AG04450 (cell line): ENCODE measurements at regions of chr2 and their contacts with region 1.

Region 1: DNA sequence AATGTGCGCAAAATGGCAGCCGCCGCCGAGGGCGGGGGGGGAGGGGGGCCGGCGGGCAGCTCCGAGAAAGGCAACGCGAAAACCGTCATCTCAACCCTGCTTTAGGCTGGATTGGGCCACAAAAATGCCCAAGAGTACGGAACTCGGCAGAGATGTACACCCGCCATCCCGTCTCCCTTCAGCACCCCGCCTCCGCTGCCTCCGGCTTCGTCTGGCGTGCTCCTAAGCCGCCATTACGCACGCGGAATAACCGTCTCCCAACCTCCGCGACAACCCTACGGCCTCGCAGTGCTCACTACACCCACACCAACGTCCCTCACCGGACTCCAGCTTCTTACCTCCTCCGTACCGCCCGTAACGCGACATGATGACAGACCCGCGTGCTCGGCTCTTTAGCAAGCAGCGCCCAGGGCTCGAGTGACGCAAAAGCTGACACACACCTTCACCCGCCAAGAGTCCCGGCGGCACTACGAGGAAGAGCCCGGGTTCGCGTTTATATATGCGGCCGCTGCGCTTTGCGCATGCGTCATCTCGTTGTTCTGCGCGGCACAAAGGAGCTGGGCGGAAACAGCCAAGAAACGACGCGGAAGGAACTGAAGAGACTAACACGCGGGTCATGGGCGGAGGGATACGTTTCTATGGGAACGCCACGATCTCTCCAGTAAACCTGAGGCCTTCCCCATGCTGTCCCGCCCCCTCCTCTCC is at the start of gene SRSF7:
- DNase-seq: peak; percentile 98
- H3K4me3 ChIP-seq: peak within 1 kb of the TSS; percentile 100
- H3K27ac ChIP-seq: peak within 1 kb of the TSS; percentile 85
- H3K27me3 ChIP-seq: no peaks in the 10 kb centered on the region
- CTCF ChIP-seq: no peak
- polyA plus RNA-seq, gene SRSF7: 195 and 238 TPM in 2 replicates

Region 2: DNA sequence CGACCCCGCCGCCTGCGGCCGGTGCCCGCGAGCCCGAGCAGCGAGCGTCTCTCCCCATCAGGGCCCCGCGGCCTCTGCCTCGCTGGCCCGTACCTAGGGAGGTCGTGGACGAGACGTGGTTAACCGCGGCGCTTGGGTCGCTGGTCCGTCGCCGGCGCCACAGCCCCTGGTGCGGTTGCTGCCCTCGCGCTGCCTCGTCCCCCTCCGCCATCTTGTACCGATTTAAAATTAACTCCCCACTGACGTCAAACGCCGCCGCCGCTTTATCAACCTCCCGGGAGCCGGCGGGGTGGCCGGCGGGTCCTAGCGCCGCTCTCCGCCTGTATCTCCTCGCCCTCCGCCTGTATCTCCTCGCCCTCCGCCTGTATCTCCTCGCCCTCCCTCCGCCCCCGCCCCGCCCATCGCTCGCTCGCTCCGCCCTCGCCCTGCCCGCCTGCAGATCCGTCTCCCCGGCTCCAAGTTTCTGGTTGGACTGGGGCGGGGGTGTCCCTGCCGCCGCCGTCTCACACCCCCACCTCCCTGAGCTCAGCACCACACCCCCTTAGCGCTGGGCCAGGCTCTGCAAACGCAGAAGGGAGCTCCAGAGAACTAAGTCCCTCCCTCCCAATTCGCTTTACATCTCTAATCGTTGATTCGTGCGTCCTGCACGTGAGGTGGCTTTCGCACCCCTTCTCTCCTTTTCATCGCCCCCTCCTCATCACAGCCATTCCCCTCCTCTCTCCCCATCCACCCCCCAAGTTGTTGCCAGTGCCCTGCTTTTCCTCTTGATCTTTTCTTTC is 373.8 kb before region 1 on chr2 and contains the start of gene ATL2:
- CTCF ChIA-PET with region 1: no interaction called
- POLR2A ChIA-PET with region 1: interaction called, 11 read pairs
- DNase-seq: peak; percentile 77
- H3K4me3 ChIP-seq: peak within 1 kb of the TSS; percentile 92
- H3K27ac ChIP-seq: peak within 1 kb of the TSS; percentile 83
- H3K27me3 ChIP-seq: peaks cover 2% of the 10 kb centered on the region
- CTCF ChIP-seq: 0 out of 2 replicates have a peak, but pooled peaks have one; percentile 3
- polyA plus RNA-seq, gene ATL2: 12.9 and 16.1 TPM in 2 replicates

Region 3: GRCh38 chr2:38444247-38444646 is 306.8 kb before region 1 on chr2:
- CTCF ChIA-PET with region 1: no interaction called
- POLR2A ChIA-PET with region 1: no interaction called
- DNase-seq: no peak
- H3K4me3 ChIP-seq: no peak overlapping the region
- H3K27ac ChIP-seq: no peak overlapping the region
- H3K27me3 ChIP-seq: peaks cover 59% of the 10 kb centered on the region
- CTCF ChIP-seq: no peak

Region 4: GRCh38 chr2:38581193-38582147 is 169.6 kb before region 1 on chr2:
- CTCF ChIA-PET with region 1: interaction called, 16 read pairs
- POLR2A ChIA-PET with region 1: interaction called, 18 read pairs
- DNase-seq: peak; percentile 57
- H3K4me3 ChIP-seq: no peak overlapping the region
- H3K27ac ChIP-seq: no peak overlapping the region
- H3K27me3 ChIP-seq: no peaks in the 10 kb centered on the region
- CTCF ChIP-seq: peak; percentile 66

Region 5: DNA sequence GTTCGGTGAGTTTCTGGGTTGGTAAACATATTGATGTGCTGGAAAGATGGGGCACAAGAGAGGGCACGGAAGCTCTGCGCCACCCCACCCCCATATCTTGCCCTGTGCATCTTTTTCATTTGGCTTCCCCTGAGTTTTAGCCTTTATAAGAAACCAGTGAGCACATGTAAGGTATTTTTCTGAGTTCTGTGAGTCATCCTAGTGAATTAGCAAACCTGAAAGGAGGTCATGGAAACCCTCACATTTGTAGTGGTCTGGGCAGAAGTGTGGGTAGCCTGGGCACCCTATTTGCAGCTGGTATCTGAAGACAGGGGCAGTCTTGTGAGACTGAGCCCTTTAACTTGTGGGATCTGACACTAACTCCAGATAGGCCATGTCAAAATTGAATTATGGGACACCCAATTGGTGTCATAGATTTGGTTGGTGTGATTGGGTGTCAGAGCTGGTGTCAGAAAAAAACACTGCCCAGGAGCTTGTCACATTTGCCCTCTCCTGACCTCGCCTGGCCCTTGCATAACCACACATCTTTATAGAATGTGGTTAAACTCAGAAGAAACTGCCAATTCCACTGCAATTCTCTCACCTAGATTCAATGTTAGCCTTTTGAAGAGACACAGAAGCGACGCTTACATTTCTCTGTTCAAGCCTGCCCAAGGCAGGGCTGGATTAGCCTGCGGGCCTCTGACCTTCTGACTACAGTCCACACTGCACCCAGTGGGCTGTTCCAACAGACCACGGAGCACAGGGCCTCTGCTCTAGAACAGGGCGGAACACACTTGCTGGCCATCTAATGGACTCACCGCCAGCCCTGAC is 97.1 kb before region 1 on chr2:
- CTCF ChIA-PET with region 1: no interaction called
- POLR2A ChIA-PET with region 1: no interaction called
- DNase-seq: no peak
- H3K4me3 ChIP-seq: no peak overlapping the region
- H3K27ac ChIP-seq: no peak overlapping the region
- H3K27me3 ChIP-seq: no peaks in the 10 kb centered on the region
- CTCF ChIP-seq: no peak

Region 6: DNA sequence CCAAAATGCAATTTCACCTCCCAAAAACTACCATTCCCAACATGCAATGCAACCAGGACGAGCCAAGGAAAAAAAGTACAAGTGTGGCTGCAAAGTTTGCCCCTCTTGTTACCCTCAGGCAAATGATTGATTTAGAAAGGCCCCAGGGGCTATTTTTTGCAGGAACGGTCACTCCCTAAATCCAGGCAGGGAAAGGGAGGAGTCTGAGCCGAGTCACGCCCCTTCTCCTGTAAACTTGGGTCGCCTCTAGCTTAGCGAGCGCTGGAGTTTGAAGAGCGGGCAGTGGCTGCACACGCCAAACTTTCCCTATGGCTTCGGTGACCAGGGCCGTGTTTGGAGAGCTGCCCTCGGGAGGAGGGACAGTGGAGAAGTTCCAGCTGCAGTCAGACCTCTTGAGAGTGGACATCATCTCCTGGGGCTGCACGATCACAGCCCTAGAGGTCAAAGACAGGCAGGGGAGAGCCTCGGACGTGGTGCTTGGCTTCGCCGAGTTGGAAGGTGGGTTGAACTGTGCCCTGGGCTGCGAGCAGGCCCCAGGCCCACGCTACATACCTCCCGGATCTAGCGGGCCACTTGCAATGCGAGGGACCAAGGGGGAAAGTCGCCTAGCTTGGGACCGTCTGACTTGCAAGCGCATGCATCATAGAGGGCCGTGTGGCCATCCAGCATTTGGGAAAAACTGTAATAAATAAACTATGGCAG is 85.0 kb before region 1 on chr2 and contains the start of gene GALM:
- CTCF ChIA-PET with region 1: no interaction called
- POLR2A ChIA-PET with region 1: interaction called, 10 read pairs
- DNase-seq: peak; percentile 84
- H3K4me3 ChIP-seq: peak within 1 kb of the TSS; percentile 82
- H3K27ac ChIP-seq: peak within 1 kb of the TSS; percentile 50
- H3K27me3 ChIP-seq: no peaks in the 10 kb centered on the region
- CTCF ChIP-seq: no peak
- polyA plus RNA-seq, gene GALM: 15.5 and 19.0 TPM in 2 replicates

Region 7: GRCh38 chr2:38734299-38735058 is 16.6 kb before region 1 on chr2:
- CTCF ChIA-PET with region 1: no interaction called
- POLR2A ChIA-PET with region 1: interaction called, 25 read pairs
- DNase-seq: no peak
- H3K4me3 ChIP-seq: no peak overlapping the region
- H3K27ac ChIP-seq: no peak overlapping the region
- H3K27me3 ChIP-seq: no peaks in the 10 kb centered on the region
- CTCF ChIP-seq: no peak

Region 8: DNA sequence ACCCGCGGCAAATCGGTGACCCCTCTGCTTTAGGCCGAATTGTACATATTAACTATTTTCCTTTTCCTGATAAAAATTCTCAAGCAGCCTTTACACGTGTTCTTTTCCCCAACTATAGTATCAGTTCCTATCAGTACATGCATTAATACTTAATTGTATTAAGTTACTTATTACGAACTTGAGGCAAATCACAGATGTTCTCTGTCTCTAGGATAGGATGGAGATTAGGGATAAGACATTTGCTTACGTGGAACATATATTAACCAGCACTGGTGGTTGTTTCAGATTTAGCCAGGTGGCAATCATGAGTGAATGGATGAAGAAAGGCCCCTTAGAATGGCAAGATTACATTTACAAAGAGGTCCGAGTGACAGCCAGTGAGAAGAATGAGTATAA is 27.6 kb after region 1 on chr2:
- CTCF ChIA-PET with region 1: interaction called, 8 read pairs
- POLR2A ChIA-PET with region 1: interaction called, 24 read pairs
- DNase-seq: no peak
- H3K4me3 ChIP-seq: peak overlapping the region; percentile 77
- H3K27ac ChIP-seq: peak overlapping the region; percentile 57
- H3K27me3 ChIP-seq: no peaks in the 10 kb centered on the region
- CTCF ChIP-seq: no peak

Region 9: DNA sequence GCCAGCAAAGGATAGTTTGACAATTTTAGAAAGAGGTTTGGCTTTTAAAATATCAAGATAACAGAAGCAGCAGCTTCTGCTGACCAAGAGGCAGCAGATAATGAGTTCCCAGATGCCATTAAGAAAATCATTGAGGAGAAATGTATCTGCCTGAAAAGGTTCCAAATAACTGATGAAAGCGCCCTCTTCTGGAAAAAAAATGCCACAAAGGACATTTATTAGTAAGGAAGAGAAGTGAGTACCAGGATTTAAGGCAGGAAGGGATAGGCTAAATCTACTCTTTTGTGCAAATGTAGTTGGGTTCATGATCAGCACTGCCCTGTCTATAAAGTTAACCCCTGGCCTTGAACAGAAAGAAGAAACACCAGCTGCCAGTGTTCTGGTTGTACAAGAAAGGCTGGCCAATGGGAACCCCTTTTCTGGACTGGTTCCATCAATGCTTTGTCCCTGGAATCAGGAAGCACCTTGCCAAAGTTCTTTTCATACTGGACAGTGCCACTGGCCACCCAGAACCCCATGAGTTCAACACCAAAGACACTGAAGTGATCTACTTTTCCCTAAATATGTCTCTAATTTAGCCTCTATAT is 84.1 kb after region 1 on chr2:
- CTCF ChIA-PET with region 1: no interaction called
- POLR2A ChIA-PET with region 1: interaction called, 20 read pairs
- DNase-seq: no peak
- H3K4me3 ChIP-seq: no peak overlapping the region
- H3K27ac ChIP-seq: no peak overlapping the region
- H3K27me3 ChIP-seq: no peaks in the 10 kb centered on the region
- CTCF ChIP-seq: peak; percentile 50

Region 10: DNA sequence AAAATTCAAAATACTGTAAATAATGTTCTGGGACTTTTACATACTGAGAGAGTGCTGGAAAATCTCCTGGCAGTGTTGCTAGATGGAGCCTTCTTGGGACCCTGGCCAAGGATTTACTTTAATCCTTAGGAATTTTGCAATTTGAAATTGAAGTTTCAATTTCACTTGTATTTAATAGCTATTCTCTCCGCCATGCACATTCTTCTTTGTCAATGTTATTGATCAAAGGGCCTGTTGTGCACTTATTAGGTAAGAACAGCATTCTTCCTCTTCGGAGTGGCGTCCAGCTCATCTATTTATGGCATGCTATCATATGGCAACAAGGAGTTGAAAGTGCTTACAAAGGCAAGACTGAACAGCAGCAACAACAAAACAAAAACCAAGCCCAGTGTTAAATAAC is 409.9 kb after region 1 on chr2:
- CTCF ChIA-PET with region 1: no interaction called
- POLR2A ChIA-PET with region 1: no interaction called
- DNase-seq: no peak
- H3K4me3 ChIP-seq: no peak overlapping the region
- H3K27ac ChIP-seq: no peak overlapping the region
- H3K27me3 ChIP-seq: no peaks in the 10 kb centered on the region
- CTCF ChIP-seq: no peak